Endothelial cell of umbilical vein (primary cell): ENCODE measurements at regions of chr13 and their contacts with region 1.

Region 1: DNA sequence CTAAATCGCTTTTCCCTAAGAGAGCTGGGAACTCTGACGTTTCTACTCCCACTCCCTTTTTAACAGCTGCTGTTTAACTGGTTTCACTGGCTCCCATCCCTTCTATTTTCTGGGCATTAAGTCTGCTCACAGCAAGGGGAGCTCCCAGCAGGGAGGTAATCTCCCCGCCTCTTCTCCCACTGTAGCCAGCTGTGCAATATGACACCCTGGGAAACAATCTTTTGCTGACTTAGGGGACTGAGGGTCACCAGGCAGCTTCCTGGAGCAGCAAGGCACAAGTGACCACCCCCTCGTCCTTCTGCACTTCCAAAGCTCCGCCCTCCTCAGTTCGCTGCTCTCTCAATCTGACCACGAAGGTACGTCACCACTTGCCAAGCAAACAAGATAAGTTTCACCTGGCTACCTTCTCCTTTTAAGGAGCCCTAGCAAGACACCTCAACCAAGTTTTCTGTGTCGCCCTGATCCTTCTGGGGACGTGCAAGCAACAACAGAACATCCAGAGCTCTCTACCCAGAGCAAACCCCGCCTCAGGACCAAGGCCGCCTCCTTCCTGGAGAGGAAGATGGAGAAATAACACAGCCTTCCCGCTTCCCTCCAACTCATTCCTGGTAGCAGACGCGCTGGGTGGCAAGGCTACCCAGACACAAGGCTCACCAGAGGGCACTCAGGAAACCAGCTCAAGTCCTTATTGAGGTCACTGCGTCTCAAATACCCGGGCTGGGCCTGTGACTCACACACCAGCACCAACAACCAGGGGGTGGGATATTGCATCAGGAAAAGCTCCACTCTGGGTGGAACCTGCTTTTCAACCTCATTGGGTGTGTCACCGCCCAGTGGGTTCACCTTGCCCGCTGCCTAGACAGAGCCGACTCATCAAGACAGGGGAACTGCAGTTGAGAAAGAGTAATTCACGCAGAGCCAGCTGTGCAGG is 92.4 kb downstream of the STK24 start:
- DNase-seq: peak; percentile 96
- H3K4me3 ChIP-seq: peak overlapping the region in 1 of 3 experiments; percentile 25
- H3K27ac ChIP-seq: peak overlapping the region; percentile 99
- H3K4me1 ChIP-seq: peaks cover 45% of the 10 kb centered on the region
- H3K27me3 ChIP-seq: no peaks in the 10 kb centered on the region
- CTCF ChIP-seq: no peak
- POLR2A ChIP-seq: peak; percentile 28

Region 2: DNA sequence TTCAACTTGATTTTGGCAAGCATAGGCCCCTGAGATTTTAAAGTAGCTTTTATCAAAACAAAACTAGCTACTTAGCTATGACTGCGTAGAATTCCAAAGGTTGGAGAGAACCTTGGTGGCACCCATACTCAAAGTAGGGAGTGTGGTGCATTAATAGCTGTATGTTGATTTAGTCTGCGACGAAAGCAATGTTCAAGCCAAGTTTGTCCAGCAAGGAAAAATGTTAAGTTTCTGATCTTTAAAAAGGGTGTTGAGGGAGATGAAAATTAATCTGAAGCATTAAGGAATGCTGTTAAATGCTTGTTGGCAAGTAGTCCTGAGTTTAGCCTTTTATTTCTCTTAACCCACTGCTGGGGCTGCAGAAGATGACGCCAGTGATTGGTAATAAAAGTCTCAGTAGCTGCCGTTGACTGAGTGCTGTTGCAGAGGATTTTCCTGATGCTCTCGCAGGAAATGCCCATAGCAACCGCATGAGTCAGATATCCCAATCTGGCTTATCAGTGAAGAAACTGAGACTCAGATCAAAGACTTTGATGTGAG is 231.6 kb before region 1 on chr13:
- CTCF ChIA-PET with region 1: no interaction called
- POLR2A ChIA-PET with region 1: no interaction called
- dilution Hi-C with region 1: no loop called
- intact Hi-C with region 1: no loop called
- DNase-seq: peak; percentile 84
- H3K4me3 ChIP-seq: peak overlapping the region in 1 of 3 experiments; percentile 10
- H3K27ac ChIP-seq: peak overlapping the region; percentile 54
- H3K4me1 ChIP-seq: peaks cover 25% of the 10 kb centered on the region
- H3K27me3 ChIP-seq: no peaks in the 10 kb centered on the region
- CTCF ChIP-seq: no peak
- POLR2A ChIP-seq: no peak

Region 3: GRCh38 chr13:98333486-98333885 is 151.1 kb before region 1 on chr13:
- CTCF ChIA-PET with region 1: no interaction called
- POLR2A ChIA-PET with region 1: no interaction called
- dilution Hi-C with region 1: no loop called
- intact Hi-C with region 1: no loop called
- DNase-seq: no peak
- H3K4me3 ChIP-seq: no peak overlapping the region
- H3K27ac ChIP-seq: no peak overlapping the region
- H3K4me1 ChIP-seq: no peaks in the 10 kb centered on the region
- H3K27me3 ChIP-seq: no peaks in the 10 kb centered on the region
- CTCF ChIP-seq: no peak
- POLR2A ChIP-seq: no peak

Region 4: DNA sequence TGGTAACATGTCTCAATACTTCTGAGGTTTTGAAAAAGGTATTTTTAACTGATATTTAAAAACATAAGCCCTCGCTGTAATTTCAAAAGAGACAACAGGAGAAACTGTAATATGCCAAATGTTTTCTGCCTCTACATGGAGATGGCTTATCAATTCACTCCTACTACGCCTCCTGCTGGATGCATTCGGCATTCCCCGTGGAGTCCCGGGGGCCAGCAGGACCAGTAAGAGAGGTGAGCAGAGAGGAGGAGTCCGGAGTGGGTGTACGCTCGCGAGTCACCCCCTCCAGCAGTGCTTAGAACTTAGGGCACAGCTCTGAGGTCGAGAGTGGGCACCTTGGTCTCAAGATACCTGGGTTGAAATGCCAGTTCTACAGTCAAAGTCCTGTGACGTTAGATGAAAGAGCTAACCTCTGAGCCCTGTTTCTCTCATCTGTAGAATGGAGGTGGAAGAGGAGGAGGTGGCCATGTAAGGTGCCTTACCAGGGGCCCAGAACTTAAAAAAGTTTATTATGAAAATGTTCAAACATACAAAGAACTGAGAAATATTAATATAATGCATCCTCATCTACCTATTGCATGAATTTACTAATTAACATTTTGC is 17.8 kb before region 1 on chr13:
- CTCF ChIA-PET with region 1: interaction called, 26 read pairs
- POLR2A ChIA-PET with region 1: no interaction called
- dilution Hi-C with region 1: no loop called
- intact Hi-C with region 1: no loop called
- DNase-seq: peak; percentile 67
- H3K4me3 ChIP-seq: no peak overlapping the region
- H3K27ac ChIP-seq: no peak overlapping the region
- H3K4me1 ChIP-seq: no peaks in the 10 kb centered on the region
- H3K27me3 ChIP-seq: no peaks in the 10 kb centered on the region
- CTCF ChIP-seq: peak; percentile 75 to 77
- POLR2A ChIP-seq: no peak

Region 5: DNA sequence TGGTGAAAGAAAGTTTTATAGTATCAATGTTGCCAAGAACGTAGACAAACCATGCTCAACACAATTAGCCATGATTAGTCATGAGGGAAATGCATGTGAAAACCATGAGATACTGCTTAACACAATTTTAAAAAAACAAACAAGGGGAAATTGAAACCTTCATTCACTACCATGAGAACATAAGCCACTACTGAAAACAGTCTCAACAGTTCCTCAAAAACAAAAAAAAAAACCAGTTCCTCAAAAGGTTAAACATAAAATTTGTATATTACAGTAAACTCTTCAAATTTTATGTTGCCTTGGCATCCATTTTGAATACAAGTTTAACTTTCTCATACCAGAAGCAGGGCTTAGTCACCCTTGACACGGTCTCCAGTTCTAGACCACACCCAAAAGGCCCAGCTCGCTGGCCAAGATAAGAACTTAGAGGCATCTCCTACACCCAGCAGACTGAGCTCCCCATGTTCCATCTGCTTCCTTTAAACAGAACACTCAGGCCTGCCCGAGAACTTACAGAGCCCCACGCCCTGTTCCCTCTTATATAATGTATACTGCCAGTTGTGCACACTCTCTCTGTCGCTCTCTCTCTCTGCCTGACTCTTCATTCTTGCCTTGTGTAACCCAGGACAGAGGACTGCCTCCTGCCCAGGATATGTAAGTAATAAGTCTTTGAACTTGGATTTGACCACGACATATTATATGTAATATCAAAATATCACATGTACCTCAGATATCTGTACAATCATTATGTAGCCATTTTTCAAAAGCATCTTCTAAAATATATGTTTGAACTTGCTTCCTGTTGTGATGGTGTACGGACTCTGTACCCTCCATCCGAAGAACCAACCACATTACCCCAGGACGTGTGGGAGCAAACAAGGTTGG is 25.0 kb after region 1 on chr13:
- CTCF ChIA-PET with region 1: interaction called, 26 read pairs
- POLR2A ChIA-PET with region 1: interaction called, 6 read pairs
- dilution Hi-C with region 1: no loop called
- intact Hi-C with region 1: loop called (anchors 1 kb)
- DNase-seq: peak; percentile 95
- H3K4me3 ChIP-seq: peak overlapping the region in 1 of 3 experiments; percentile 12
- H3K27ac ChIP-seq: peak overlapping the region; percentile 95
- H3K4me1 ChIP-seq: peaks cover 64% of the 10 kb centered on the region
- H3K27me3 ChIP-seq: no peaks in the 10 kb centered on the region
- CTCF ChIP-seq: no peak
- POLR2A ChIP-seq: no peak

Region 6: GRCh38 chr13:98570929-98571372 is 86.4 kb after region 1 on chr13:
- CTCF ChIA-PET with region 1: interaction called, 15 read pairs
- POLR2A ChIA-PET with region 1: no interaction called
- dilution Hi-C with region 1: no loop called
- intact Hi-C with region 1: loop called (anchors 1 kb)
- DNase-seq: peak; percentile 75
- H3K4me3 ChIP-seq: peak overlapping the region in 2 of 3 experiments; percentile 13 to 31
- H3K27ac ChIP-seq: no peak overlapping the region
- H3K4me1 ChIP-seq: peaks cover 46% of the 10 kb centered on the region
- H3K27me3 ChIP-seq: no peaks in the 10 kb centered on the region
- CTCF ChIP-seq: no peak
- POLR2A ChIP-seq: no peak

Region 7: DNA sequence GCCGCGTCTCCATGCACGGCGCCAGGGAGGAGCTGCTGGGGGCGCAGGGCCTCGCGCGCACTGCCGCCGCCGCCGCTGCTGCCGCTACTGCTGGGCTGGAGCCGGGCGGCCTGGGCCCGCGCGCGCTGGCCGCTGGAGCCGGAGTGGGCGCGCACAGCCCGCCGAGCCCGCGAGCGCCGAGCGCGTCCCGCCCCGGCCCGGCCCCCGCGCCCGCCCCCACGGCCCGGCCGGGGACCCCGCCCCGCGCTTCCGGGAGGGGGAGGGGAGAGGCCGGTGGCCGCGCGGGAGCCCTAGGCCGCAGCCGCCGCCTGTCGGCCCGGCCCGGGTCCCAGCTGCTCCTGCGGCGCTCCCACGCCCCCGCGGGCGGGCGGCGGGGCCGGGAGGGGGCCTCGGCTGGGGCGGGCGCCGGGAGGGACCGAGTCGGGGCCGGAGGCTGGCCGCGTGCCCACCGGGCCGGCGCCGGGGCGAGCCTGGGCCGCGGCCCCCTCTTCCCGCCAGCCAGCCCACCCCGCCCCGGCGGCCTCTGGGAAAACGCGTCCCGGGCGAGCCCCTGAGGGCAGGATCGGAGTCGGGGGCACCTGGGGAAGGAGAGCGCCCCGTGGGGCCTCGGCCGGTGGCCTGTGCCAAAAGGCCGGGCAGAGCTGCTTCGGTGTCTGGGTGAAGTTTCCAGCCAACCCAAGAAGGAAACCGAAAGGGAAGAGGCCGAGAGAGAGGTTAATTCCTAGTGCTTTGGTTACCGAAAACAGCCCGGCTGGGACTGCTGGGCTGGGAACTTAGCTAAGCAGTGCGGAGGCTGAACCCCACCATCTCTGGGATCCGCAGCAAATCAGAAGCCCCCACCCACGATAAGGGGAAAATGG is 92.6 kb after region 1 on chr13 and contains the start of gene STK24:
- CTCF ChIA-PET with region 1: interaction called, 15 read pairs
- POLR2A ChIA-PET with region 1: interaction called, 5 read pairs
- dilution Hi-C with region 1: no loop called
- intact Hi-C with region 1: loop called (anchors 1 kb)
- DNase-seq: peak; percentile 78
- H3K4me3 ChIP-seq: peak within 1 kb of the TSS; percentile 84 to 98 (median 98)
- H3K27ac ChIP-seq: peak within 1 kb of the TSS; percentile 95
- H3K4me1 ChIP-seq: peaks cover 20% of the 10 kb centered on the region
- H3K27me3 ChIP-seq: no peaks in the 10 kb centered on the region
- CTCF ChIP-seq: no peak
- POLR2A ChIP-seq: peak; percentile 73
- total RNA-seq, gene STK24: 99.4 and 100 TPM in 2 replicates

Region 8: GRCh38 chr13:98598043-98598442 is 113.5 kb after region 1 on chr13:
- CTCF ChIA-PET with region 1: interaction called, 14 read pairs
- POLR2A ChIA-PET with region 1: no interaction called
- dilution Hi-C with region 1: no loop called
- intact Hi-C with region 1: no loop called
- DNase-seq: peak; percentile 31
- H3K4me3 ChIP-seq: no peak overlapping the region
- H3K27ac ChIP-seq: no peak overlapping the region
- H3K4me1 ChIP-seq: no peaks in the 10 kb centered on the region
- H3K27me3 ChIP-seq: peaks cover 9 to 14% of the 10 kb centered on the region in 2 experiments
- CTCF ChIP-seq: peak in 1 of 2 donors; percentile 36
- POLR2A ChIP-seq: no peak